ENCODE measurements at regions of chr9 and their contacts with region 1.

Region 1: DNA sequence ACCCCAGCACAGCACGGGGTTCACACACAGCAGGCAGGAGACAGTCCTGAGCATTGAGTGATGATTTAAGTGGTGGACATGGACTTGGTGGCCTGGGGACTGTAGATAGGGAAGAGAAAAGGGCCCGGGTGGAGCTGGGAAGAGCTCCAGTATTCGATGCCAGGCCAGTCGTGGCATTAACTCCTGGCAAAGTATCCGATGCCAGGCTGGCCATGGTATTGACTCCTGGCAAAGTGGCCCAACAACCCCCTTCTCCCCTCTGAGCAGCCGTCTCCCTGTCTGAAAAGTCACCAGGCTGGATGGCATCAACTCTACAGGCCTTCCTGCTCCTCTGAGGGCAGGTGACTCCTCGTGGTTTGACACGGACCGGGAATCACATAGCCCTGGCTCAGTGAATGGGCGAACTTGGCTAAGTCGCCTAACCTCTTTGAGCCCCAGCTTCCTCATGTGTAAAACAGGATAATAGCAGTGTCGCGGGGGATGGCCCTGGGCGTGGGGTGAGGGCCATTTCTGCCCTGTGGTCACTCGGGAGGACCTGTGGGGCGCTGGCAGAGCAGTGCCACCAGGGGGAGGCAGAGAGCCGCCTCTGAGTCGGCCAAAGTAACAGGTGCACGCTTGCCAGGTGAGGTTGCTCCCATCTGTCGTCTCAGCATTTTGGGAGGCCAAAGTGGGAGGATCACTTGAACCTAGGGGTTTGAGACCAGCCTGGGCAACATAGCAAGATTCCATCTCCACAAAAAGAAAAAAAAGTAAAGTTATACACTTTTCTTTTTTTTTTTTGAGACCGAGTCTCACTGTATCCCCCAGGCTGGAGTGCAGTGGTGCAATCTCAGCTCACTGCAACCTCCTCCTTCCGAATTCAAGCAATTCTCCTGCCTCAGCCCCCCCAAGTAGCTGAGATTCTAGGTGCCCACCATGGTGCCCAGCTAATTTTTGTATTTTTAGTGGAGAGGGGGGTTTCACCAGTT is 5.7 kb upstream of the SEC16A start:
- DNase-seq: peak; percentile 71
- ATAC-seq: peak; percentile 17 to 20

Region 2: GRCh38 chr9:136625101-136626060 is 136.8 kb after region 1 on chr9:
- intact Hi-C with region 1: loop called (anchors 1 to 2 kb)
- DNase-seq: peak; percentile 88
- ATAC-seq: peak; percentile 72 to 83

Region 3: DNA sequence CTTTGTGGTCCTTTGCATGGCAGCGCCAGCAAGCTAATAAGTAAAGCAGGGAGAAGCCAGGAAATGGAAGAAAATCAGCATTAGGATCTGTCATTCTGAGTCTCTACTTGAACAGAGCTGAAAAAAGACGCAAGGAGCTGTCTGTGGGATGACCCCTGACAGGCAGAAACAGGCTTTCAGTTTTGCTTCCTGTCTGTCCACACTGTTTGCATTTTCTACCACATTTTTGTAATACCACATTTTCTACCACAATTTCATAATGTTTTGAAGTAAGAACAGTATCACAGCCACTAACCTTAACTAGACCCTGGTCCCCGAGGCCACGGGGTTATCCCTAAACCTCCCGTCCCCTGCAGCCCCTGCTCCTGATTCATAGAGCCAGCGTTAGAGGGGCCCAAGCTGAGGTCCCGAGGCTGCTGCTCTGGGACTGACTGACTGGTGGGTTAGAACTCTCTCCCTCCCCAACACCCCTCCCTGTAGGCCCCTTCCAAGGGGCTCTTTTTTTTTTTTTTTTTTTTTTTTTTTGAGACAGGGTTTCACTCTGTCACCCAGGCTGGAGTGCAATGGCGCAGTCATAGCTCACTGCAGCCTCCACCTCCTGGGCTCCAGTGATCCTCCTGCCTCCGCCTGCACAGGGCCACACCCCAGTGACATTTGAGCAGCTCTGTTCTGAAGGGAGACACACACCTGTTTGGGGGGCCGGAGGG is 511.8 kb after region 1 on chr9:
- intact Hi-C with region 1: no loop called
- DNase-seq: no peak
- ATAC-seq: no peak

Measured in left cardiac atrium (tissue), 4 donors.